IMR-90 (cell line): ENCODE measurements at regions of chr11 and their contacts with region 1.

Region 1: GRCh38 chr11:22244986-22245592 is 52.2 kb downstream of the ANO5 start:
- DNase-seq: peak; percentile 19
- ATAC-seq: peak; percentile 80
- H3K4me3 ChIP-seq: no peak overlapping the region
- H3K27ac ChIP-seq: no peak overlapping the region
- H3K4me1 ChIP-seq: no peaks in the 10 kb centered on the region
- H3K27me3 ChIP-seq: no peaks in the 10 kb centered on the region
- CTCF ChIP-seq: peak; percentile 60
- POLR2A ChIP-seq: no peak
- RAD21 ChIP-seq: peak; percentile 45

Region 2: DNA sequence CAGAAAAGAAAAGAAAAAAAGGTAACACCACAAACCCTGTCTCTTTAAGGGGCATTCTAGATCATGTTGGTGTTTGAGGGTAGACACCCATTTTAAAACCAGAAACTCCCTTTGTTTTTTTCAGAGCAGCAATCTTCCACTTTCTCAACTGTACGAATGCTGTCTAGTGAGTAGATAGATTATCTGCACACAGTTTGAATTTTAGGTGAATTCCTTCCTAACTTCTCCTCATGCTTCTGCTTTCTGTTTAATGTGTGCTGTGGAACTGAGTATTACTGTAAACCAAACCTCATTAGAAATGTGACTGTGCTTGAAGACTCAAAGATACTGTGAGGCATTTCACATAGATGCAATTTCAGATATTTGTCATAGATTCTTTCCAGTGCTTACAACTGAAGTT is 1755.1 kb before region 1 on chr11:
- CTCF ChIA-PET with region 1: no interaction called
- POLR2A ChIA-PET with region 1: no interaction called
- dilution Hi-C with region 1: no loop called
- in situ Hi-C with region 1: no loop called
- intact Hi-C with region 1: loop called (anchors 5 kb)
- DNase-seq: no peak
- ATAC-seq: no peak
- H3K4me3 ChIP-seq: no peak overlapping the region
- H3K27ac ChIP-seq: no peak overlapping the region
- H3K4me1 ChIP-seq: no peaks in the 10 kb centered on the region
- H3K27me3 ChIP-seq: no peaks in the 10 kb centered on the region
- CTCF ChIP-seq: no peak
- POLR2A ChIP-seq: no peak
- RAD21 ChIP-seq: no peak

Region 3: DNA sequence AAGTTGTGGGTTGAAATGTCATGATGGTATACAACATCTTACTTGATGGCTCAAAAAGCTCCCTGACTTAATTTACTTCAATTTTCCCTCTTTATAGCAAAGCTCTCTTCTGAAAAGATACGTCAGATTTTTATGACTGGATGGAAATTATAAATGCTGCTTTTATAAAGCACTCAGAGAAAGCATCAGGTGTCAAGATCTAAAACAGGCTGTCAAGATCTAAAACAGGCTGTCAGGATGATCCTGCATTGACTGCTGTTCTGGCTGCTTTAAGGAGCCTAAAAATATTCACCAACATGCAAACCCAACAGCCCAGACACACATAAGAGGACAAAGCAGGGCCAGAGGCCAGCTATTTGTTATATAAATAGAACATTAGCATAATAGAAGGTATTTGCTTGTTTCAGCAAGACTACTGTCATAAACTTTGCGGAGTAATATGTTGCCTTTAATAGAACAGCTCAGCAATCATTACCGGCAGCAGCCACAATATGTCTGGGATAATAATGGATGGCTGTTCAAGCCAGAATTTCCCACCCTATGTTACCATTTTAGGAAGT is 129.5 kb before region 1 on chr11:
- CTCF ChIA-PET with region 1: no interaction called
- POLR2A ChIA-PET with region 1: no interaction called
- dilution Hi-C with region 1: no loop called
- in situ Hi-C with region 1: no loop called
- intact Hi-C with region 1: no loop called
- DNase-seq: no peak
- ATAC-seq: no peak
- H3K4me3 ChIP-seq: no peak overlapping the region
- H3K27ac ChIP-seq: no peak overlapping the region
- H3K4me1 ChIP-seq: no peaks in the 10 kb centered on the region
- H3K27me3 ChIP-seq: no peaks in the 10 kb centered on the region
- CTCF ChIP-seq: no peak
- POLR2A ChIP-seq: no peak
- RAD21 ChIP-seq: no peak

Region 4: GRCh38 chr11:22304337-22304961 is 59.4 kb after region 1 on chr11:
- CTCF ChIA-PET with region 1: no interaction called
- POLR2A ChIA-PET with region 1: no interaction called
- dilution Hi-C with region 1: no loop called
- in situ Hi-C with region 1: no loop called
- intact Hi-C with region 1: loop called (anchors 1 kb)
- DNase-seq: peak; percentile 23
- ATAC-seq: no peak; the same call in 1 of the 2 replicates
- H3K4me3 ChIP-seq: no peak overlapping the region
- H3K27ac ChIP-seq: no peak overlapping the region
- H3K4me1 ChIP-seq: no peaks in the 10 kb centered on the region
- H3K27me3 ChIP-seq: no peaks in the 10 kb centered on the region
- CTCF ChIP-seq: peak; percentile 59
- POLR2A ChIP-seq: no peak
- RAD21 ChIP-seq: peak; percentile 42

Region 5: DNA sequence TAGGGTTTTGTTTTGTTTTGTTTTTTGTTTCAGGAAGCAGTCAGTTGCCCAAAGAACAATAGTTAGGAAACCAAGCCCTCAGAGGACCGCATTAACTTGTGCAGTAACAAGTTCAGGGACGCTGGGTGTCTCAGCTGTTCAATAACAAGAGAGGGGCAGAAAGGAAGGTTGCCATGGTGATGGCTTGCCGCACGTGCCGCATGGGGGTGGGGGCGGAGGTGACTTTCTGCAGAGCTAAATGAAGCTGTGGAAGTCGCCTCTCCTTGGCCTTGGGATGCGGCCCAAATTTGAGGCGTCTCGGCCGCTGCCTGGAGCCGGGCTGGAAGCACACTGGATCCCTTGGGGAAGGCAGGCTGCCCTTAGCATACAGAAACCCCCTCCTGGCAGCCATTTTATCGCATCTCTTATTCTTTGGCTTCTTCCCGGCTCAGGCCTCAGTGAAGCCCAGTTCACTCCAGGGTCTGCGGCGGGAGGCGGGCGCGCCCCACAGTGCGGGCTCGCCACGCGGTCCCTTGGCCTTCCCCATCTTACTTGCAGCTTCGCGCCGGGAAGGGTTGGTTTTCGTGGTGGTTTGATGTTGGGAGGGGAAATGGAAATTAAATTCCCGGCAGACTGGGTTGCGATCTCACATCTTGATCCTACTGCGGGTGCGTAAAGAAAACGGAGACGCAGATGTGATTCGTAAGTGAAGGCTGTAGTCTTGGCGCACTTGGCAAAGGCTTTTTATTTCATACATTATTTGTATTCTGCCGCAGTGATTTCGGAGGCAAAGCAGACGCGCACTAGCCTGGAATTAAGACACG is 187.4 kb after region 1 on chr11:
- CTCF ChIA-PET with region 1: no interaction called
- POLR2A ChIA-PET with region 1: no interaction called
- dilution Hi-C with region 1: no loop called
- in situ Hi-C with region 1: no loop called
- intact Hi-C with region 1: no loop called
- DNase-seq: peak; percentile 24
- ATAC-seq: peak; percentile 79
- H3K4me3 ChIP-seq: peak overlapping the region; percentile 14
- H3K27ac ChIP-seq: no peak overlapping the region
- H3K4me1 ChIP-seq: 0 out of 2 replicates have a peak, but pooled peaks cover 1% of the 10 kb centered on the region
- H3K27me3 ChIP-seq: no peaks in the 10 kb centered on the region
- CTCF ChIP-seq: no peak
- POLR2A ChIP-seq: no peak
- RAD21 ChIP-seq: no peak